Thyroid gland (tissue), 4 donors: ENCODE measurements at regions of chr4 and their contacts with region 1.

Region 1: DNA sequence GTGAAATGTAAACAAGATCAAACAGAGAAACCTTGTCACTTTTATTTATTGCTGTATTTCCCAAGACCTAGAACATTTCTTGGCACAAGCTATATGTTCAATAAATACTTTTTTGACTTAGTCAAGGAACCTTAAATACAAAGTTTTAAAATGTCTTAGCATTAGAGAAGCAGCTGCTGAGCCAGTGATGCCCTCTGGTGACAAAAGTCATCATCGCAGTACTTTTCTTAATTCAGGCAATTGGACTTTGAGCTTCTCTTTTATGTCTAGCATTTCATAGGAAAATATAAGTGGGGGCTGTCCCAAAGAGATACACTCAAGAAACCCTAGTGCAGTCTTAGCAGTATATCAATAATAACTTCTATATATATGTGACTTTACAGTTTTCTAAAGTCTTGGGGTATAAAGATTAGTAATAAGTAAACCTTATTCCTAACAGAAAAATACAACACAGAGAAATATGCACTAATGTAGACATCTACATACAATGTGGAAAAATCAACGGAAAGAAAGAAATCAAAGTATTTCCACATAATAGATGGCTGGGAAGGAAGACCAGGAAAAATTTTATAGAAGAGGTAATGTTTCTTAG is 118.4 kb downstream of the DTHD1 start:
- DNase-seq: peak; percentile 32 to 33
- H3K4me3 ChIP-seq: no peak overlapping the region
- H3K27ac ChIP-seq: no peak overlapping the region
- H3K4me1 ChIP-seq: no peaks in the 10 kb centered on the region
- H3K27me3 ChIP-seq: no peaks in the 10 kb centered on the region
- CTCF ChIP-seq: peak in 5 of 6 experiments; percentile 50 to 82 (median 73)
- POLR2A ChIP-seq: no peak

Region 2: DNA sequence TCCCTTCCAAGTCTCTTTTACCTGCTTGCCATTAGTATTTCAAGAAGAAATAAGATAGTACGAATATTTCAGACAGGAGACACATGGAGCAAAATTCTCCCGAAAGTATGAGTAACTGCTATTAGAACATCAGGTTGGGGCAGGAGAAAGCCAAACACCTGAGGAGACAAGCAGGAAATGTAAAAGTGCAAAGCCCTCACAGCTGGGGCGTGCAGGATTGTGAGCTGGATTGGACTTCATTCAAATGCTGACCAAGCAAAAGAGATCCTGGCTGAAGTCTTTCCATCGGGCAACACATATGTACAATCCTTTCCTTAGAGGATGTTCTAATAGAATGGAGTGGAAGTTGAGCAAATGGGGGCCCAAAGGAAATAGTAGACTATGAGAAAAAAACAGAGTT is 41.7 kb before region 1 on chr4:
- intact Hi-C with region 1: loop called (anchors 5 kb)
- DNase-seq: no peak
- H3K4me3 ChIP-seq: no peak overlapping the region
- H3K27ac ChIP-seq: no peak overlapping the region
- H3K4me1 ChIP-seq: no peaks in the 10 kb centered on the region
- H3K27me3 ChIP-seq: no peaks in the 10 kb centered on the region
- CTCF ChIP-seq: no peak
- POLR2A ChIP-seq: no peak